ENCODE measurements at regions of chr5 and their contacts with region 1.

Region 1: DNA sequence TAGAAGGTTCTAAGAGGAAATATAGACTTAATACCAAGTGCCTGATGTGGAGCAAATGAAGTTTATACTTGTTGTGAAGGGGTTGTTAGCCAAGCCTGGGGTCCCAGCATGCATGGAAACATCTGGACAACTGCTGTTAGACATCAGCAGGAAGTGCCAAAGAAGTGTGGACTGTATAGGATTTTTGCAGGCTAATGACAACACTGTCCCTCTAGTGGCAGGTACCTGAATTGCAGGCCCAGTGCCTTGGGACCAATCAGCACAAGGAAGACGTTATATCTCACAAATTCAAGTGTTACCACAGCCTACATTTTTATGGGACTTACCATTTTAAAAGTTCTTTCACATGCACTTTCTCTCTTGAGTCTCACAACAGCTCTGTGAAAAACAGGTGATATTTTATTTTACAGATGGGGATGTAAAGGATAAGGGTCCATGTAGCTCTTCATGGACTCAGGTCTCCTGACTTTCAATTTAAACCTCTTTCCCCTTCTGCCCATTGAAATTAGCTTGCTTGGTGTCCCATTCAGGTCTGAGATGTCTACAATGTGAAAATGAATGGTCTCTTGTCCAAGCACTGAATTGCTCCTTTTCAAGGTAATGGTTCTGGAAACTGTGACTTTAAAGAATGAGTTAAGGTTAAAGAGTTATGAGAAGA is 89.0 kb upstream of the MAP1B start:
- DNase-seq: peak in 2 of 10 donors; percentile 22 to 43

Region 2: DNA sequence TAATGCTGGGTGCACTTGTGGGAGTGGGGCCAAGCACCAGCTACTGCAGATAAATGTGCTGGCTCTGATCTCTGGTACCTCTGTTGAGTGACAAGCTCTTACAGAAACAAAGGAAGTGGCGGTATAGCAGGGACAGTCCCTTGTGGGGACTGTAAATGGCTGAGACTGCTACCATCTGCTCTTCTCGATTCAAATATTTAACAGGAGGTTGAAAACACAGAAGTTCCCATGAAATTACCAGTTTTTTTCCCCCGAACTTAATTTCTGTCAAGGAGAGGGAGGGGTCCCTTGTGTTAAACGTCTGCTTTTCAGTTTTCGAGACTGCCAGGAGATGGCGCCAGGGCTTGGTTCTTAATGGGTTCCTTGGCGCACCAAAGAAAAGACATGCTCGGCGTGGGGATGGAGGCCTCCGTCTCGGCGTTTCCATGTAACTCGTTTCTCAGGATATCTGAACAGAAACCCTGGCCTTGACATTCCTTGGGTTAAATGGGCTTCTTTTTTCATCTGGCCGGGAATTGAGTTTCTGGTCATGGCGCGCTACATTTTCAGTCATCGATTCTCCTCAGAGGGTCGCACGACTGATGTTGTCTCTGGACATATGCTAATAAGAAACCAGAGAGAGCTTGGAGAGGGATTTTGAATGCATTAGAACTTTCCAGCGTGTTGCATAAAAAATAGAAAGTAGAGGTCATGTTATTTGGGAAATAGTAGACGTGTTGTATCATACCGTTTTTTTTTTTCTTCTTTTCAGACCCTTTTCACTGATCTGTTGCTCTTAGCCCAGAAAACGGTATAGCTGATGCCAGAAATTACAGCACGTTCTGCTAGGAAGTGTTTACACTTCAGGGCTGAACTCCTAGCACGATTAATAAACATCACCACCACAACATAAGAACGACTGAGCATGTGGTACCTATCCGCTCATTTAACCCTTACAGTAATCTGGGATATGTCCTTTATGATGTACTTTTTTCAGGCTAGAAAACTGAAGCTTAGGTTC is 235.2 kb before region 1 on chr5:
- intact Hi-C with region 1: loop called (anchors 10 kb)
- DNase-seq: peak; percentile 74 to 97 (median 88)

Region 3: DNA sequence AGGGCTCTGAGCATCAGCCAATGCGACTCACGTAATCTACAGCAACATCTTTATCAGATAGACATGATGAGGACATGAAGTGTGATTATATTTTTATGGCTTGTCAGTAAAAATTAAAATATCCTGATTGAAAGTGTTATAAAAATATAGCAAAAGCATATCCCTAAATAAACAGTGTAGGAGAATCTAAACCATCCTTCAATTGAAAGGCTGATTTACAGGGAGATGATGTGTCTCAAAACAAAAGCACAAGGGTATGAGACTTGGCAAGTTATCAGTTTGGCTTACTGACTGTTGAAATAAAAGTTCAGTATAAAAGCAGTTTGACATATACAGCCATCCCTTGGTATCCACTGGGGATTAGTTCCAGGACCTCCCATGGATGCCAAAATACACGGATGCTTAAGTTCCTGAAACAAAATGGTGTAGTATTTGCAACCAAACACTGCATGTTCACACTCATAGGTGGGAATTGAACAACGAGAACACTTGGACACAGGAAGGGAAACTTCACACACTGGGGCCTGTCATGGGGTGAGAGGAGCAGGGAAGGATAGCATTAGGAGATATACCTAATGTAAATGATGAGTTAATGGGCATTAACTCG is 60.9 kb before region 1 on chr5:
- intact Hi-C with region 1: no loop called
- DNase-seq: no peak